T-cell (primary cell): ENCODE measurements at regions of chr1 and their contacts with region 1.

Region 1: GRCh38 chr1:174217787-174218574 is 58.7 kb downstream of the RABGAP1L start:
- DNase-seq: peak in 1 of 35 experiments; percentile 68
- ATAC-seq: peak; percentile 53 to 66 (median 58)
- H3K4me3 ChIP-seq: no peak overlapping the region
- H3K4me3 Mint-ChIP-seq: no peak overlapping the region
- H3K27ac ChIP-seq: no peak overlapping the region
- H3K27ac Mint-ChIP-seq: no peak overlapping the region
- H3K4me1 ChIP-seq: no peaks in the 10 kb centered on the region
- H3K4me1 Mint-ChIP-seq: peaks cover 0 to 8% (median 6%) of the 10 kb centered on the region in 3 donors
- H3K27me3 ChIP-seq: no peaks in the 10 kb centered on the region
- H3K27me3 Mint-ChIP-seq: no peaks in the 10 kb centered on the region

Region 2: GRCh38 chr1:173429471-173430402 is 788.2 kb before region 1 on chr1:
- CTCF ChIA-PET with region 1: interaction called, 3 to 14 read pairs
- POLR2A ChIA-PET with region 1: no interaction called
- DNase-seq: peak; percentile 44 to 78 (median 64)
- ATAC-seq: peak; percentile 65 to 89 (median 78)
- H3K4me3 ChIP-seq: peak overlapping the region in 1 of 2 donors; percentile 29
- H3K4me3 Mint-ChIP-seq: peak overlapping the region; percentile 1 to 58 (median 48)
- H3K27ac ChIP-seq: no peak overlapping the region
- H3K27ac Mint-ChIP-seq: peak overlapping the region; percentile 80 to 86
- H3K4me1 ChIP-seq: peaks cover 7 to 13% of the 10 kb centered on the region in 2 experiments
- H3K4me1 Mint-ChIP-seq: peaks cover 24 to 27% (median 26%) of the 10 kb centered on the region in 3 donors
- H3K27me3 ChIP-seq: no peaks in the 10 kb centered on the region
- H3K27me3 Mint-ChIP-seq: no peaks in the 10 kb centered on the region

Region 3: GRCh38 chr1:173997796-173998195 is 220.2 kb before region 1 on chr1:
- CTCF ChIA-PET with region 1: no interaction called
- POLR2A ChIA-PET with region 1: no interaction called
- DNase-seq: no peak
- ATAC-seq: no peak
- H3K4me3 ChIP-seq: no peak overlapping the region
- H3K4me3 Mint-ChIP-seq: no peak overlapping the region
- H3K27ac ChIP-seq: no peak overlapping the region
- H3K27ac Mint-ChIP-seq: peak overlapping the region in 1 of 2 donors; percentile 39
- H3K4me1 ChIP-seq: peaks cover 0 to 9% of the 10 kb centered on the region in 2 experiments
- H3K4me1 Mint-ChIP-seq: peaks cover 51 to 65% (median 57%) of the 10 kb centered on the region in 3 donors
- H3K27me3 ChIP-seq: no peaks in the 10 kb centered on the region
- H3K27me3 Mint-ChIP-seq: no peaks in the 10 kb centered on the region

Region 4: DNA sequence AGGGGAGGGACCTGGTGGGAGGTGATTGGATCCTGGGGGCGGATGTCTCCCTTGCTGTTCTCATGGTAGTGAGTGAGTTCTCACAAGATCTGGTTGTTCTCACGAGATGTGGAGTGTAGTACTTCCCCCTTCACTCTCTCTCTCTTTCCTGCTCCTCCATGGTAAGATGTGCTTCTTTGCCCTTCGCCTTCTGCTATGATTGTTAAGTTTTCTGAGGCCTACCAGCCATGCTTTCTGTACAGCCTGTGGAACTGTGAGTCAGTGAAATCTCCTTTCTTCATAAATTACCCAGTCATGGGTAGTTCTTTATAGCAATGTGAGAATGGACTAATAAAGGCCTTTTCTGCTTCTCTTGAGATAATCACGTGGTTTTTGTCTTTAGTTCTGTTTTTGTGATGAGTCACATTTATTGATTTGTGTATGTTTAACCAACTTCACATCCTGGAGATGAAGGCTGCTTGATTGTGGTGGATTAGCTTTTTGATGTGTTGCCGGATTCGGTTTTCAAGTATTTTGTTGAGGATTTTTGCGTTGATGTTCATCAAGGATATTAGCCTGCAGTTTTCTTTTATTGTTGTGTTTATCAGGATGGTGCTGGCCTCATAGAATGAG is 13.2 kb before region 1 on chr1:
- CTCF ChIA-PET with region 1: interaction called, 4 to 20 read pairs
- POLR2A ChIA-PET with region 1: interaction called in 1 of 2 experiments, 3 read pairs
- DNase-seq: peak in 3 of 35 experiments; percentile 5 to 51 (median 9)
- ATAC-seq: peak; percentile 34 to 62 (median 56)
- H3K4me3 ChIP-seq: no peak overlapping the region
- H3K4me3 Mint-ChIP-seq: peak overlapping the region; percentile 2 to 57 (median 14)
- H3K27ac ChIP-seq: peak overlapping the region; percentile 44
- H3K27ac Mint-ChIP-seq: peak overlapping the region; percentile 73 to 81
- H3K4me1 ChIP-seq: peaks cover 2 to 19% of the 10 kb centered on the region in 2 experiments
- H3K4me1 Mint-ChIP-seq: peaks cover 62 to 73% (median 65%) of the 10 kb centered on the region in 3 donors
- H3K27me3 ChIP-seq: no peaks in the 10 kb centered on the region
- H3K27me3 Mint-ChIP-seq: no peaks in the 10 kb centered on the region